ENCODE measurements at regions of chr5 and their contacts with region 1.

Region 1: DNA sequence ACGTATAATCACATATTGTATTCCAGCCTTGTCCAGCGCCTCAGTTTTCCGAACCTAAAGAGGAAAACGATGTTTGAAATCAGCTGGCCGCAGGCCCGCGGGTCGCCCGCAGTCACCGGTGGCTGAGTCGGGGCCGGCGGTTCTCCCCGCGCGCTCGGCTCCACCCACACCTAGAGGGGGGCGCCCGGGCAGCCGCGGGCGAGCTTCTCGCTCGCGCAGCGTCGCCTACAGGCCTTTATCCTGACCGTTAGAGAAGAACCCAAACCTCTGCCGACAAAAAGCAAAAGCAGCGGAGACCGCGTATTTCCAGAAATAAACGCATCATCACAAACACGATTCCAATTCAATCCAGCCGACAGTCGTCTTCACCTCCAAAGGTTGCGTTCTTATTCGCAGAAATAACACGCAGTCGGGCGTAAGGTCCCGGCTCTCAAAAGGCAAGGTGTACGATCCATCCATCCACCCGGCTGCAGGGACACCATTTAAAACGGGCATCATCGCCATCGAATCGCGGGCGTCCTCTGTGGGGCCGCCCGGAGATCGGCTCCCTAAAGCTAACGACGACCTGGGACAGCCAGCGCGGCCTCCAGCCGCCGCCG is 680 bp upstream of the NIPBL start:
- DNase-seq: peak; percentile 90
- H3K4me3 ChIP-seq: peak overlapping the region; percentile 68 to 90 (median 84)
- H3K27ac ChIP-seq: peak overlapping the region; percentile 93 to 98 (median 96)
- H3K4me1 ChIP-seq: peaks cover 0 to 51% (median 42%) of the 10 kb centered on the region in 4 donors
- H3K27me3 ChIP-seq: no peaks in the 10 kb centered on the region
- CTCF ChIP-seq: peak in 2 of 4 experiments; percentile 28 to 46
- EP300 ChIP-seq: no peak
- POLR2A ChIP-seq: no peak

Region 2: DNA sequence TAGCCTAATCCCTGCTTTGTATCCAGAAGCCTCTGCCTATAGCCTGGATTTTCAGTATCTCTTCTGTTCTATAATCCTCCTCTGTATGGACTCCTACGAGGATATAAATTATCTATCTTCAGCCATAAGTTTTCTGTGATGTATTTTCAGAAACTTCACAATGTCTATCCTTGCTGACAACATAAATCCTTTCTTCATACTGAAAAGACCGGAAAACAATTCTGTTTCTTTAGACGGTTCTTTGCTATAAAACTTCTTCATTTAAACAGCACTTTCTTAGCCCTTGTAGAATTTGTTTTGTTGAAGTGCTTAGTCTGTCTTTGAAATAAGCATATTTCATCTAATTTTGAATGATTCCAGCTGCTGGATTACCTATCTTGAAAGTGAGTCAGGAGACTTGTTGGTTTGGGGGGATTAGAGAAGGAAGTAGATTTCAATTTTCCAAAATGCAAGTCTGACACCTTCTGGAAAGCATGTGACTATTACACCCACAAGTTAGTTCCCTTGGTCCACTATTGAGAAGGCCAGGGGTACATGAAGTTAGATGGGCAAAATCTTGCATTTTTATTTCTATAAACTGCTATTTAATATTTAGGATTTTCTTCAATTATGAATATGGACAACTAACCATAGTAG is 477.9 kb before region 1 on chr5:
- intact Hi-C with region 1: loop called (anchors 10 kb)
- DNase-seq: no peak
- H3K4me3 ChIP-seq: no peak overlapping the region
- H3K27ac ChIP-seq: no peak overlapping the region
- H3K4me1 ChIP-seq: peaks cover 0 to 26% (median 23%) of the 10 kb centered on the region in 4 donors
- H3K27me3 ChIP-seq: no peaks in the 10 kb centered on the region
- CTCF ChIP-seq: peak; percentile 25 to 58 (median 36)
- EP300 ChIP-seq: no peak
- POLR2A ChIP-seq: no peak

Region 3: DNA sequence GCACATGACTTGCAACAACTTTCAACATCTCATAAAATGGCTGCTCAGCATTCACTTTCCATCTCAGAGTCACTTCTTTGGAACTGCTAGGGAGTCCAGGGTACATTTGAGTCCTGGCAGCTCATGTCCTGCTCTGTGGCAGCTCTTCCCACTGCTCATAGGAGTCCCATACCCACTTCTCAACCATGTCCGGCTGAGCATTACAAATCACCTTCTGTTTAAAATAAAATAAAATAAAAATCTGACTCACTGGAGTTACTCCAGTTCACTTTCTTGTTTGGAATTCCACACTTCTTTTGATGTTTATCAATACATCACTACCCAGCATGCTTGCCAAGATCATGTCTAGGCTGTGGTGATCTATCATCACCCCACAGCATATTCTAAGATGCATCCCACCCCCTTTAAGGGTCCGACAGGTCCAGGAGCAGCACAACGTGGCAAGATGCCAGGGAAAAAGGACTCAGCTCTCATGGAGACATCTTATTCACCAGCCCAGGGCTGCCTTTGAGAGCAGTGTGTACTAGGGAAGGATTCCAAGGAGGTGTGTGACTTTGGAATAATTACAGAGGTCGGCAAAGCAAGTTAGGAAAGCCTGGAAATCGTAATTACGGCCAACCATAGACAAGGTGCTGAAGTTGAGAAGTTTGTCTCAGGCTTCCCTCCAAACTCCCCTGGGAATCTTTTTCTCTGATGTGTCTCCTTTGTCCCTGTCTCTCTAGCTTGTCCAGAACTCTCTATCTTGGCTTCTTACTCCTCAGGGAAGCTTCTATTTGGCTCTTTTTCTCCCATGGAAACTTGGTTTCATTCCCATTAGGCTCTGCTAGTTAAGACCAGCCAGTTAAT is 380.9 kb before region 1 on chr5:
- intact Hi-C with region 1: loop called (anchors 10 kb)
- DNase-seq: peak; percentile 84
- H3K4me3 ChIP-seq: no peak overlapping the region
- H3K27ac ChIP-seq: peak overlapping the region; percentile 57 to 78 (median 68)
- H3K4me1 ChIP-seq: peaks cover 0 to 22% (median 21%) of the 10 kb centered on the region in 4 donors
- H3K27me3 ChIP-seq: no peaks in the 10 kb centered on the region
- CTCF ChIP-seq: no peak
- EP300 ChIP-seq: no peak
- POLR2A ChIP-seq: no peak

Region 4: DNA sequence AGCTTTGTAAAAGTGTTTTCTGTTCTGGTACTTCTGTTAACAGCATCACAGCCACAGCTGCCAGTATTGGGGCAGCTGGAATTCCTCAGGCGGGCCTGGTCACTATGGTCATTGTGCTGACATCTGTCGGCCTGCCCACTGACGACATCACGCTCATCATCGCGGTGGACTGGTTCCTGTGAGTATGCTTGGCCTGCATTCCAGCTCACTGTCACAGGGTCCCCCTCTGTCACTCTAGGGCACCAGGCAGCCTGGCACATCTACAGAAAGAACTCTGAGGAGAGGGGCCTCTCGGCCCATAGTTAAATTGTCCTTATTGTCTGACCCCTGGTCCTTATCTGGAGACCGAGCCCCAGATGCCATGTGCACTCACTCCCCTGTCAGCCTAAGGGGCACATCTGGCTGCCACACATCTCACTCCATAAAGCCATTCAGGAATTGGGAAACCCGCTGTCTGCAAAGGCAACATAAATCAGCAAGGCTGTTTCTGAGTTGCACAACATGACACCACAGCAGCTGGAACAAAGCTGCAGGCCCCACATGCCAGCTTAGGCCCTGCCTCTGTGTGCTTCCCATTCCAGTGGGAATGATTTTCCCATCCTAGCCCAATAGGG is 192.0 kb before region 1 on chr5:
- intact Hi-C with region 1: no loop called
- DNase-seq: peak; percentile 70
- H3K4me3 ChIP-seq: no peak overlapping the region
- H3K27ac ChIP-seq: peak overlapping the region in 1 of 4 donors; percentile 19
- H3K4me1 ChIP-seq: no peaks in the 10 kb centered on the region
- H3K27me3 ChIP-seq: no peaks in the 10 kb centered on the region
- CTCF ChIP-seq: no peak
- EP300 ChIP-seq: no peak
- POLR2A ChIP-seq: no peak

Region 5: GRCh38 chr5:36739751-36740221 is 136.1 kb before region 1 on chr5:
- intact Hi-C with region 1: loop called (anchors 5 kb)
- DNase-seq: no peak
- H3K4me3 ChIP-seq: no peak overlapping the region
- H3K27ac ChIP-seq: no peak overlapping the region
- H3K4me1 ChIP-seq: peaks cover 0 to 11% (median 10%) of the 10 kb centered on the region in 4 donors
- H3K27me3 ChIP-seq: peaks cover 0 to 8% (median 3%) of the 10 kb centered on the region in 3 donors
- CTCF ChIP-seq: peak in 3 of 4 experiments; percentile 40 to 59 (median 55)
- EP300 ChIP-seq: no peak
- POLR2A ChIP-seq: no peak

Region 6: GRCh38 chr5:36854402-36855140 is 21.3 kb before region 1 on chr5:
- intact Hi-C with region 1: no loop called
- DNase-seq: no peak
- H3K4me3 ChIP-seq: no peak overlapping the region
- H3K27ac ChIP-seq: no peak overlapping the region
- H3K4me1 ChIP-seq: no peaks in the 10 kb centered on the region
- H3K27me3 ChIP-seq: no peaks in the 10 kb centered on the region
- CTCF ChIP-seq: no peak
- EP300 ChIP-seq: no peak
- POLR2A ChIP-seq: no peak

Region 7: GRCh38 chr5:36928947-36929346 is 53.1 kb after region 1 on chr5:
- intact Hi-C with region 1: no loop called
- DNase-seq: no peak
- H3K4me3 ChIP-seq: no peak overlapping the region
- H3K27ac ChIP-seq: no peak overlapping the region
- H3K4me1 ChIP-seq: peaks cover 0 to 35% (median 22%) of the 10 kb centered on the region in 4 donors
- H3K27me3 ChIP-seq: no peaks in the 10 kb centered on the region
- CTCF ChIP-seq: no peak
- EP300 ChIP-seq: no peak
- POLR2A ChIP-seq: no peak

Region 8: GRCh38 chr5:36944607-36945225 is 68.8 kb after region 1 on chr5:
- intact Hi-C with region 1: loop called (anchors 2 kb)
- DNase-seq: no peak
- H3K4me3 ChIP-seq: no peak overlapping the region
- H3K27ac ChIP-seq: no peak overlapping the region
- H3K4me1 ChIP-seq: peaks cover 0 to 61% (median 39%) of the 10 kb centered on the region in 4 donors
- H3K27me3 ChIP-seq: no peaks in the 10 kb centered on the region
- CTCF ChIP-seq: peak in 2 of 4 experiments; percentile 22 to 47
- EP300 ChIP-seq: no peak
- POLR2A ChIP-seq: no peak

Region 9: GRCh38 chr5:36982146-36982545 is 106.3 kb after region 1 on chr5:
- intact Hi-C with region 1: no loop called
- DNase-seq: no peak
- H3K4me3 ChIP-seq: no peak overlapping the region
- H3K27ac ChIP-seq: no peak overlapping the region
- H3K4me1 ChIP-seq: peaks cover 0 to 6% (median 0%) of the 10 kb centered on the region in 4 donors
- H3K27me3 ChIP-seq: no peaks in the 10 kb centered on the region
- CTCF ChIP-seq: no peak
- EP300 ChIP-seq: no peak
- POLR2A ChIP-seq: no peak

Region 10: DNA sequence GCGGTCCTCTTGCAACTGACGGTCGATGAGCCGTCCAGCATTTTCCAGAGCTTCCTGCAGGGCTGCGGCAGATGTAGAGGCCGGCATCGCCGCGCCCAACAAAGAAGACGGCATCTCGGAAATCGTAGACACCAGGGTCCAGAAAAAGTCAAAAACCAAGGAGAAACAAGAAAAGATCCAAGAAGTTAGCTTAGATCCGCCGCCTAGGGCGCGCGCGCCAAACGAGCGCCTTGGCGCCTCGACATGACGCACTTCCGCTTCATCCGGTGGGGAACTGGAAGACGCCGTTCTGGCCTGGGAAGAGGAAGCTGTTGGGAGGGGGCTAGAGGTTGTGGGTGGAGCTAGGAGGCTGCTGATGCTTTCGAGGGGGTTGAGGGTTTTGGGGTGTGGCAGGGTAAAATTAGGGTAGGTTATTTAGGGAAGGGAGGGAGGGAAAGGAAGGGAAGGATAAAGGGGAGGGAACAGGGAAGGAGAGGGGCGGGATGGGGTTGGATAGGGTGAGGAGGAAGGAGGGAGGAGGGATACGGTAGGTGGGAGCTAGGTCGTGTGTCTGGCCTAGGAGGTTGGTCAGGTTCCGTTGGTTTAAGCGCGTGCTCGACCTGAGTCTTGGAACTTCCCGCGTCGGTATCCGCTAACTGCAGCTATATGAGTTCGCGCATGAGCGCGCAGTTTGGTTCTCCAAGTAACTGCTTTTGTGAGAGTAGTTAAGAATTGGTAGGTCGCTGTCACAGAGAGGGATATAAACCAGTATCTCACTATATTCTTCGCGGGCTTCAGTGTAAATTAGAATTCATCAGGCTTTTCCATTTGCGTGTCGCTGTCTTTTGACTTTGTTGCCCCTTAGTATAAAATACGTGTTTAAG is 495.2 kb after region 1 on chr5 and contains the start of gene NUP155:
- intact Hi-C with region 1: loop called (anchors 10 kb)
- DNase-seq: peak; percentile 96
- H3K4me3 ChIP-seq: peak within 1 kb of the TSS; percentile 74 to 91 (median 84)
- H3K27ac ChIP-seq: peak within 1 kb of the TSS; percentile 83 to 90 (median 87)
- H3K4me1 ChIP-seq: peaks cover 0 to 36% (median 22%) of the 10 kb centered on the region in 4 donors
- H3K27me3 ChIP-seq: no peaks in the 10 kb centered on the region
- CTCF ChIP-seq: no peak
- EP300 ChIP-seq: no peak
- POLR2A ChIP-seq: peak; percentile 47 to 60
- total RNA-seq, gene NUP155: 12.7 to 24.4 (median 18.8) TPM

Measured in sigmoid colon (tissue), 7 donors.